CD4-positive, alpha-beta memory T cell (primary cell): ENCODE measurements at regions of chr6 and their contacts with region 1.

Region 1: DNA sequence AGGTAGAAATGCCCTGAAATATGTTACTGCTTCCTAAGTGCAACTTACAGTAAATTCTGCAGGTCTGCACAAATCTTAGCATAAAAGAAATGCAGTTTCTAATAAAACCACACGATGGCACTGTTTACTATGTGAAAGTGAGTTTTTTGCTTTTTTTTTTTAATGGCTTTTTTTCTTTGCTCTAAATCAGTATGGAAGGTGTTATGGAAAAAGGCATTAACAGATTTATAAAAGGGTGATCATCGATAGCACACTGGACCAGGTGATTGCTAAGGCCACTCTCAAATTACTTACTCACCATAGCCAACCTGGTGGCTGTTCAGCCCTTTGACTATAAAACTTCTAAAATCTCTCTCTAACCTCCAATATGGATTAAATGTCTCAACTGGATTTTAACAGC is 45.8 kb downstream of the AHI1 start:
- DNase-seq: peak in 4 of 5 donors; percentile 33 to 51 (median 42)
- H3K4me3 ChIP-seq: no peak overlapping the region
- H3K4me3 Mint-ChIP-seq: no peak overlapping the region
- H3K27ac ChIP-seq: no peak overlapping the region
- H3K27ac Mint-ChIP-seq: no peak overlapping the region
- H3K4me1 ChIP-seq: no peaks in the 10 kb centered on the region
- H3K4me1 Mint-ChIP-seq: no peaks in the 10 kb centered on the region
- H3K27me3 ChIP-seq: no peaks in the 10 kb centered on the region
- H3K27me3 Mint-ChIP-seq: no peaks in the 10 kb centered on the region

Region 2: DNA sequence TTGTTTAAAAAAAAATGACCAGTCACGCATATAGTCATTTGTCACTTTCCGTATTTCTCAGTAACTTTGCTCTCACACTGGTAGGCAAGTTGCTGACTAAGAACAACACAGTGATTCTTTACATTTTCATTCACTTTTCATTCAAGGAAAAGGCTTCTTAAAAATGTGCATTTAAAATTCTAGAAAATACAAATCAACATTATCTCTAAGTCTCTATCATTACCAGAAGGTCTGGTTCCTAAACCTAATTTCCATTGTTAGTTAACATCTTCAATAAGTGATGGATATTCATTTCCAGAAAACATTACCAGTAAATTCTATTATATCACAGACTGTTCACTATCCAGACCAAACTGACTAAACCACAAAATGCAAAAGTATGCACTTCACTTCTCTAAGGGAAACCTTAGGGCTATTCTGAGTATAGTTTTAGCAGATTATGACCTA is 69.5 kb before region 1 on chr6:
- CTCF ChIA-PET with region 1: no interaction called
- POLR2A ChIA-PET with region 1: no interaction called
- intact Hi-C with region 1: no loop called
- DNase-seq: no peak
- H3K4me3 ChIP-seq: no peak overlapping the region
- H3K4me3 Mint-ChIP-seq: no peak overlapping the region
- H3K27ac ChIP-seq: no peak overlapping the region
- H3K27ac Mint-ChIP-seq: no peak overlapping the region
- H3K4me1 ChIP-seq: no peaks in the 10 kb centered on the region
- H3K4me1 Mint-ChIP-seq: no peaks in the 10 kb centered on the region
- H3K27me3 ChIP-seq: no peaks in the 10 kb centered on the region
- H3K27me3 Mint-ChIP-seq: no peaks in the 10 kb centered on the region

Region 3: DNA sequence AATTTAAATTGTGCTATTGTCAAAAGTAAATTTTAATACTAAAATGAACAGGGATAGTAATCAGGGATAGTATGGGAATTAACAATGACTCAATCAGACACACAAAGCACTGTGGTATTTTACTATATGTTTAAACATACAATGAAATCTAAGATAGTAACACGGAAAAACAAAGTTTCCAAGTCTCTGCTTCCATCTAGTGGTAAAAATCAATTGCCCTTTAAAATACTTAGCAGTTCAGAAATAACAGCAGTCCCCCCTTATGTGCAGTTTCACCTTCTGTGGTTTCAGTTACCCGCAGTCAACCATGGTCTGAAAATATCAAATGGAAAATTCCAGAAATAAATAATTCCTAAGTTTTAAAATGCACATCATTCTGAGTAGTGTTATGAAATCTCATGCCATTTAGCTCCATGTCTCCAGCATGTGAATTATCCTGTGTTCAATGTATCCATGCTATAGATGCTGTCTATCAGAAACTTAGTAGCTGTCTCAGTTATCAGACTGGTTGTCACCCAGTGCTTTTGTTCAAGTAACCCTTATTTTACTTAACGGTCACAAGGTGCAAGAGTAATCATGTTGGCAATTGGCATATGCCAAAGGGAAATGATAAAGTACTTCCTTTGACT is 12.7 kb before region 1 on chr6:
- CTCF ChIA-PET with region 1: interaction called, 20 read pairs
- POLR2A ChIA-PET with region 1: no interaction called
- intact Hi-C with region 1: no loop called
- DNase-seq: peak in 2 of 5 donors; percentile 6 to 15
- H3K4me3 ChIP-seq: no peak overlapping the region
- H3K4me3 Mint-ChIP-seq: peak overlapping the region in 3 of 8 donors; percentile 5 to 29 (median 28)
- H3K27ac ChIP-seq: no peak overlapping the region
- H3K27ac Mint-ChIP-seq: peak overlapping the region in 1 of 7 donors; percentile 5
- H3K4me1 ChIP-seq: peaks cover 15% of the 10 kb centered on the region
- H3K4me1 Mint-ChIP-seq: peaks cover 5 to 19% (median 11%) of the 10 kb centered on the region in 4 donors
- H3K27me3 ChIP-seq: no peaks in the 10 kb centered on the region
- H3K27me3 Mint-ChIP-seq: no peaks in the 10 kb centered on the region

Region 4: DNA sequence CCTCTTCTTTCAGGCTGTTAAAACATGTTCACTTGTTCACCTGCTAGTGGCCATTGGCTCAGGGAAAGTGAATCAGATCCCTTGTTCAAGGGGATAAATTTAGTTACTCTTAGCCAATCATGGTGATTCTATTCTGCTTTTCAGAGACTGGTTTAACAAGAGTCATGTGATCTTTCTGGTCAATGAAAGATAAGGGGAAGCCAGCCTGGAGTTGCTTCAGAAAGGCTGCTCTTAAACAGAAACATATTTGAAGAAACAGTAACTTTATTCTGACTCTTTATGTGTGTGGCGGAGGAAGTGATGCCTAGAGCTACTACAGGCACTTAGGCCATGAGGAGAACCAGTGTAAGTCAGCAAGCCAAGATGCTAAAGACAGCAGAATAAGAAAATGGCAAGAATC is 73.9 kb after region 1 on chr6:
- CTCF ChIA-PET with region 1: no interaction called
- POLR2A ChIA-PET with region 1: no interaction called
- intact Hi-C with region 1: no loop called
- DNase-seq: no peak
- H3K4me3 ChIP-seq: no peak overlapping the region
- H3K4me3 Mint-ChIP-seq: no peak overlapping the region
- H3K27ac ChIP-seq: no peak overlapping the region
- H3K27ac Mint-ChIP-seq: no peak overlapping the region
- H3K4me1 ChIP-seq: no peaks in the 10 kb centered on the region
- H3K4me1 Mint-ChIP-seq: no peaks in the 10 kb centered on the region
- H3K27me3 ChIP-seq: no peaks in the 10 kb centered on the region
- H3K27me3 Mint-ChIP-seq: peaks cover 0 to 1% of the 10 kb centered on the region in 2 donors

Region 5: GRCh38 chr6:135535989-135536414 is 84.3 kb after region 1 on chr6:
- CTCF ChIA-PET with region 1: interaction called, 5 read pairs
- POLR2A ChIA-PET with region 1: no interaction called
- intact Hi-C with region 1: loop called (anchors 5 kb)
- DNase-seq: peak in 4 of 5 donors; percentile 38 to 47 (median 40)
- H3K4me3 ChIP-seq: no peak overlapping the region
- H3K4me3 Mint-ChIP-seq: peak overlapping the region in 5 of 8 donors; percentile 24 to 57 (median 35)
- H3K27ac ChIP-seq: no peak overlapping the region
- H3K27ac Mint-ChIP-seq: peak overlapping the region in 1 of 7 donors; percentile 2
- H3K4me1 ChIP-seq: no peaks in the 10 kb centered on the region
- H3K4me1 Mint-ChIP-seq: peaks cover 2 to 6% (median 4%) of the 10 kb centered on the region in 4 donors
- H3K27me3 ChIP-seq: no peaks in the 10 kb centered on the region
- H3K27me3 Mint-ChIP-seq: peaks cover 0 to 7% of the 10 kb centered on the region in 2 donors

Region 6: GRCh38 chr6:135546680-135547418 is 95.2 kb after region 1 on chr6:
- CTCF ChIA-PET with region 1: no interaction called
- POLR2A ChIA-PET with region 1: no interaction called
- intact Hi-C with region 1: no loop called
- DNase-seq: no peak
- H3K4me3 ChIP-seq: no peak overlapping the region
- H3K4me3 Mint-ChIP-seq: no peak overlapping the region
- H3K27ac ChIP-seq: no peak overlapping the region
- H3K27ac Mint-ChIP-seq: no peak overlapping the region
- H3K4me1 ChIP-seq: no peaks in the 10 kb centered on the region
- H3K4me1 Mint-ChIP-seq: no peaks in the 10 kb centered on the region
- H3K27me3 ChIP-seq: no peaks in the 10 kb centered on the region
- H3K27me3 Mint-ChIP-seq: peaks cover 4 to 7% of the 10 kb centered on the region in 2 donors